HCT116 (cell line): ENCODE measurements at regions of chr14 and their contacts with region 1.

Region 1: DNA sequence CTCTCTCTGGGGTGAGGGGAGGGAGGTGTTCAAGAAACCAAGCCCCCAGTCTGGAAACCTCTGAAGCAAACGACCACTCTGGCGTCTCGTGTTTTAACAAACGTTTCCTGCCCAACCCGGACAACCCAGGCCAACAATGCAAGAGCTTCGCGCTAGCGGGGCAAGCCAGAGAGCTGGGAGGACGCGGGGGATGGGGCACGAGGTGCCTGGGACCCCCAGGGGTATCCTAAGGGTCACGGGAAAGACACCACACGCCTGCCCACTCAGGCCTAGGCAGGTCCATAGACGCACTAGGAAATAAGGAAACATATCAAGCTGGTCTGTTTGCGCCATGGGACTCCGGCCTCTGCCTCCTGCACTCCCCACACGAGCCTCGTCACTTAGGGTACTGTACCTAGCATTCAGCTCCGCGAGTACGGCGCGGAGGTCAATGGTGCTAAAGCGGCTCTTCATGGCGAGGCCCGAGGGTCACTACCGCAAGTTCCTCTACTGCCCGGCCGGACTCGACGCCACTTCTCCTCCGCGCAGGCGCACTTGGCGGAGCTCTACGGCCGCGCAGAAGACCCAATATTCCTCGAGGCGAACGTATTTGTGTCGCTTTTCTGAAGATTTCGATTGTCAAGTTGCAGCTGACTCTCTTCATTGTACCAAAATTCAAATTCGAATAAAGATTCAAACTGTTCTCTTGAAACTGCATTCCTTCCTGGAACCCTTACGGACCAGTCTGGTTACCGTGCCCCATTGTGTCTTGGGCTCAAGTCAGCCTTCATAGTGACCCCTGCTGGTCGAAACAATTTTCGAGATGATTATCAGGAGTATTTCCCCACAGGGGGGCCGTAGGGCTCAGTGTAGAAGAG is at the start of gene NEMF:
- DNase-seq: peak; percentile 90
- ATAC-seq: peak; percentile 75
- H3K4me3 ChIP-seq: peak within 1 kb of the TSS; percentile 82 to 89
- H3K27ac ChIP-seq: peak within 1 kb of the TSS; percentile 66
- H3K4me1 ChIP-seq: peaks cover 7 to 22% of the 10 kb centered on the region in 2 experiments
- H3K27me3 ChIP-seq: no peaks in the 10 kb centered on the region
- CTCF ChIP-seq: peak; percentile 76 to 95 (median 91)
- POLR2A ChIP-seq: no peak
- RAD21 ChIP-seq: peak; percentile 42; the same call in 1 of the 2 replicates
- total RNA-seq, gene NEMF: 57.7 TPM

Region 2: DNA sequence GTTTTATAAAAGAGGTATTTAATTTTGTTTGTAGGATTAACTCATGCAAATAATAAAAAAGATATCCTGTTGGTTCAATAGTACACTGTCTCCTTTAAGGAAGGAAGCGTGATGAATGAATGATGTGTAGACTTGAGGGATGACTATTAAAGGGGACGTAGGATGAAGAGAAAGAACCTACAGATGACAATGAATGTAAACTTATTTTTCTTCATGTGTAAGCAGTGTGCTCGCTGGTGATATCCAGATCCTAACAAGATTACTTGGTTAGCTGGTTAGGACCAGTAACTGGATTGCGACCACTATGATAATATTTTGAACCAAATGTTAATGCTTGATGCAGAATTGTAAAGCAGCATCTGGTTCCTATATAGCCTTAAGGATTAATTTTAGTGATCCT is 43.0 kb after region 1 on chr14:
- CTCF ChIA-PET with region 1: no interaction called
- POLR2A ChIA-PET with region 1: no interaction called
- RAD21 ChIA-PET with region 1: no interaction called
- intact Hi-C with region 1: no loop called
- DNase-seq: no peak
- ATAC-seq: no peak
- H3K4me3 ChIP-seq: no peak overlapping the region
- H3K27ac ChIP-seq: no peak overlapping the region
- H3K4me1 ChIP-seq: peaks cover 32 to 72% of the 10 kb centered on the region in 2 experiments
- H3K27me3 ChIP-seq: no peaks in the 10 kb centered on the region
- CTCF ChIP-seq: no peak
- POLR2A ChIP-seq: no peak
- RAD21 ChIP-seq: no peak

Region 3: GRCh38 chr14:50103558-50103957 is 251.0 kb after region 1 on chr14:
- CTCF ChIA-PET with region 1: interaction called, 18 read pairs
- POLR2A ChIA-PET with region 1: interaction called, 6 read pairs
- RAD21 ChIA-PET with region 1: no interaction called
- intact Hi-C with region 1: no loop called
- DNase-seq: no peak
- ATAC-seq: no peak
- H3K4me3 ChIP-seq: no peak overlapping the region
- H3K27ac ChIP-seq: no peak overlapping the region
- H3K4me1 ChIP-seq: peaks cover 9 to 26% of the 10 kb centered on the region in 2 experiments
- H3K27me3 ChIP-seq: no peaks in the 10 kb centered on the region
- CTCF ChIP-seq: no peak
- POLR2A ChIP-seq: no peak
- RAD21 ChIP-seq: no peak

Region 4: DNA sequence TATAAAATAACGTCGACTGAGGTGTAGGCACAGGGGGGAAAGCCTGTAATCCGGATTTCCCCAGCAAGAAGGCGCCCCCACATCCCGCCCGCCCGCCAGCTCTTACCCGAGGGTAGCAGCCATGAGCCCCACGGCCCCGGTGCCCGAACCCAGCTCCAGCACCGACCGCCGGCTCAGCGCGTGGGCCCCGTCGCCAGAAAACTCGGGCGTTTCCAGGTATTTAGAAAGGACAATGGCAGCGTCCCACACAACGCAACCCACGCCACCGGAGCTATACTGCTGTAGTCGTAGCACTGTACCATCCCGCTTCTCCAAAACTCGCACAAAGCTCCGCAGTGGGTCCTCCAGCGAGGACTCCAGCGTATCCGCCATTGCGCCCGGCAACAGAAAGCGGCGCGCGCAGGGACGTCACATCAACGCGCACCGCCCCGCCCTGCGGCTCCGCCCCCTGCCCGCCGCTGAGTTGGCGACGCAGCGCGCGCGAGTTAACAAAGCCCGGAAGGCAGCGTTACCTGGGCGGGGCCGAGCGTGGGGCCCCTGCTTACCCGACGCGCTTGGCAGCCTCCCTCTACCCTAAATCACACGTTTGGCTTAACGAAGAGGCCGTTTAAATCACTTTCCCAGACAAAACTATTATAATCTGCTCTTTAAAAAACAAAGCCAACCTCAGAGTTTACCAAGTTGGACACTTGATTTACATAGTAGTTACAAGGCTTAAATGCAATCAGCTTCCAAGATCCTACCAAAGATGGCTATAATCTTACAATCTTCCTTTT is 263.8 kb after region 1 on chr14 and contains the start of gene VCPKMT:
- CTCF ChIA-PET with region 1: no interaction called
- POLR2A ChIA-PET with region 1: no interaction called
- RAD21 ChIA-PET with region 1: no interaction called
- intact Hi-C with region 1: no loop called
- DNase-seq: peak; percentile 73
- ATAC-seq: peak; percentile 100
- H3K4me3 ChIP-seq: peak within 1 kb of the TSS; percentile 76 to 90
- H3K27ac ChIP-seq: peak within 1 kb of the TSS; percentile 50
- H3K4me1 ChIP-seq: peaks cover 7 to 11% of the 10 kb centered on the region in 2 experiments
- H3K27me3 ChIP-seq: no peaks in the 10 kb centered on the region
- CTCF ChIP-seq: no peak
- POLR2A ChIP-seq: peak; percentile 78
- RAD21 ChIP-seq: 0 out of 2 replicates have a peak, but pooled peaks have one; percentile 11
- total RNA-seq, gene VCPKMT: 9.7 TPM

Region 5: DNA sequence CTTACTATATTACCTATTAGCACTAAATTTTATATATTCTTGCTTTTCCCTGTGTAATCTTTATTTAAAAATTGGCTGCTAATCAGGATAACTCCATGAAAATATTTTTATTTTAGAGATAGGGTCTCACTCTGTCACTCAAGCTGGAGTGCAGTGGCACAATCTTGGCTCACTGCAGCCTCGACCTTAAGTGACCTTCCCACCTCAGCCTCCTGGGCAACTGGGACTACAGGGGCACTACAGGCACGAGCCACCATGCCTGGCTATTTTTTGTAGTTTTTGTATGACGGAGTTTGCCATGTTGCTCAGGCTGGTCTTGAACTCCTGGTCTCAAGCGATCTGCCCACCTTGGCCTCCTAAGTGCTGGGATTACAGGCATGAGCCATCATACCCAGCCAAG is 296.3 kb after region 1 on chr14:
- CTCF ChIA-PET with region 1: no interaction called
- POLR2A ChIA-PET with region 1: no interaction called
- RAD21 ChIA-PET with region 1: no interaction called
- intact Hi-C with region 1: no loop called
- DNase-seq: no peak
- ATAC-seq: no peak
- H3K4me3 ChIP-seq: no peak overlapping the region
- H3K27ac ChIP-seq: no peak overlapping the region
- H3K4me1 ChIP-seq: no peaks in the 10 kb centered on the region
- H3K27me3 ChIP-seq: no peaks in the 10 kb centered on the region
- CTCF ChIP-seq: no peak
- POLR2A ChIP-seq: no peak
- RAD21 ChIP-seq: no peak